Motor neuron (in vitro differentiated cells): ENCODE measurements at regions of chr4 and their contacts with region 1.

Region 1: GRCh38 chr4:144174401-144175067 is 34.0 kb upstream of the GYPA start:
- ATAC-seq: peak; percentile 64 to 97 (median 74)
- H3K4me3 ChIP-seq: no peak overlapping the region
- H3K27ac ChIP-seq: no peak overlapping the region
- H3K4me1 ChIP-seq: no peaks in the 10 kb centered on the region

Region 2: DNA sequence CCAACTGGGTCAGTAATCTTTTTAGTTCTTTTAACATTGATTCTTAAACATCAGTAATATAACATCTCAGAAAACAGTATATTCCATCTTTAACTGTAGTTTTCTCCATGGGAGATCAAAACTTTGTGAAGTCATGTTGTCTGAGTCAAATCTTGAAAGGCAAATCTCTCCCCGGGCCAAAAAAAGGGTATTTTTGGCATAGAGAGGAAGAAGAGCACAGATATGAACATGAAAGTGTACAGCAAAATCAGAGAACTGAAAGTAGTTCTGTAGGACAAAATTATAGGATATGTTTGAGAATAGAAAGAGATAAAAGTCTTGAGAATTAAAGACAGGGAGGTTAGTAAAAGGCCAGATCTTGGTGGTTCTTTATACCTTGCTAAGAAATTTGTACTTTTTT is 142.3 kb after region 1 on chr4:
- in situ Hi-C with region 1: no loop called
- ATAC-seq: no peak
- H3K4me3 ChIP-seq: no peak overlapping the region
- H3K27ac ChIP-seq: no peak overlapping the region
- H3K4me1 ChIP-seq: no peaks in the 10 kb centered on the region

Region 3: GRCh38 chr4:144562019-144562705 is 387.6 kb after region 1 on chr4:
- in situ Hi-C with region 1: loop called in 1 of 9 experiments (anchors 25 kb)
- ATAC-seq: peak in 4 of 8 experiments; percentile 27 to 94 (median 32)
- H3K4me3 ChIP-seq: no peak overlapping the region
- H3K27ac ChIP-seq: no peak overlapping the region
- H3K4me1 ChIP-seq: peaks cover 0 to 3% of the 10 kb centered on the region in 2 donors

Region 4: DNA sequence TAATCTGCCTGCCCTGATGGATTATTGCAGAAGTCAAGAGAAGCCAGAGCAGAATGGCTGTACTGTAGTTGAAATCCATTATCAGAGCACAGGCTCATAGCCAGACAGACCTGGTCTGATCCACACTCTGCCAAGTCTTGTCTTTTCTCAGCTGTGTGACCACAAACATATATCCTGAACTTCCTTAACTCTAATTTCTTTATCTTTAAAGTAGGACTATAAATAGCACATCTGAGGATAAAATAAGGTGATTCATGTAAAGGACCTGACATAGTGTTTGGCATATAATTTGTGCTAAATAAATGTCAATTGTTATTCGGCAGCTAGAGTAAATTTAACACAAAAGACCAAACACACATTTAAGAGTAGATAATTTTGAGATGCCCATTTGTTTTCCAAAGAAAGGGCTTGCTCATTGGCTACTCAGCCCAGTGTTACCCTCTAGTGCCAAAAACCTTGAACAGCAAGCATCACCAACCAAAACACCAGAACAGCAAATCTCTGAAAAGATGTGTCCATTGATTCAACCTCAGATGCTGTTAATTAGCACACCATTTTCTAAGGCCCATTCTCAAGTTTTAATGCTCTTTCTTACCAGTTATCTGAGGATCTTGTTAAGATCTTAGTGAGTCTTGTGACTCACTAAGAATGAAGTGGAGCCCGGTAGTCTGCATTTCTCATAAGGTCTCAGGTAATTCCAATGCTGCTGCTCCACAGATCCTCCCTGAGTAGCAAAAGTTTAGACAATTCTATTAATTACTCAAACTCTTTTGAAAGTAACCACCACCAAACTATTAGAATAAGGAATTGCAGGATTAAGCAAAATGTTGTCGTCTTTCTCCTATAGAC is 580.3 kb after region 1 on chr4:
- in situ Hi-C with region 1: loop called in 2 of 9 experiments (anchors 25 kb)
- ATAC-seq: peak in 4 of 8 experiments; percentile 28 to 52 (median 46)
- H3K4me3 ChIP-seq: no peak overlapping the region
- H3K27ac ChIP-seq: no peak overlapping the region
- H3K4me1 ChIP-seq: no peaks in the 10 kb centered on the region

Region 5: DNA sequence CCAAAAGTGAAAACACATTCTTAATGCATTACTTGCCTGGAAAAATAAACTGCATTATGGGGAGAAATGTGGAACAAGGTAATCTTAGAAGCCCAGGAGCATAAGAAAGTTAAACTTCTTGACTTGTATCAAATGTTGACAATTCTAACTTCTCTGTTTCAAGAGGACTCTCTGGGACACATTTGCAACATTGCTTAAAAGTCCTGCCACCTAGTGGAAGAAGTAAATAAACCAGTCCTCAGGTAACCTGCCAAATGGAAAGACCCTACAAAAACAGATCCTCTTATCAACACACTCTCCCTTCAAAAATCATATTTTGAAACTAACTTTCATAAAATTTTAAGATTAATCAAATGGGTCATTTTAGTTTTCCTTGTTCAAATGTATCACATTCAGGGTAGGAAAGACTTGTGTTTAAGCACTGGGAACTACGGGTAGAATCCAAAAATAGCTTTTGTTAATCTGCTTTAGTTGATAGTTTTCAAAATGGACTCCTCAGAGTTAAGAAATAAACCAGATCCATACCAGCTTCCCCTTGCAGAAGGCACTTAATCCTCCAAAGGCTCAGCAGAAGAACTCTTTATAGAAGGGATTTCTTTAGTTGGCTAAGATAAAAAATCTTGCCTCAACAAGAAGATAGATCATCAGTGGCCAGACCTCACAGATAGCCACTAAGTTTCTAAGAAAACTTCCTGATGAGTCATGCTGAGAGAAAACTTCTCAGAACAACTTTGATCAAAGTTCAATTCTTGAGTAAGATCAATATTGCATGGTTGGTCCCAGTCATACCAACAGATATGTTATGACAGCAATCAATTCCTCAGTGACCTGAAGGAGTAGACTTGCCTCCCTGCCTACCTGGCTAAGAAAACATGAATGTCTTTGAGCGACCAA is 613.1 kb after region 1 on chr4:
- in situ Hi-C with region 1: loop called in 1 of 9 experiments (anchors 25 kb)
- ATAC-seq: peak in 2 of 8 experiments; percentile 40 to 50
- H3K4me3 ChIP-seq: no peak overlapping the region
- H3K27ac ChIP-seq: no peak overlapping the region
- H3K4me1 ChIP-seq: no peaks in the 10 kb centered on the region